H1 (cell line): ENCODE measurements at regions of chr6 and their contacts with region 1.

Region 1: GRCh38 chr6:36759148-36759759 is 61.6 kb downstream of the RAB44 start:
- DNase-seq: peak; percentile 23 to 94
- H3K4me3 ChIP-seq: no peak overlapping the region
- H3K27ac ChIP-seq: no peak overlapping the region
- H3K4me1 ChIP-seq: peaks cover 0 to 8% (median 2%) of the 10 kb centered on the region in 4 experiments; a peak in 3 of 7 replicates
- H3K27me3 ChIP-seq: no peaks in the 10 kb centered on the region
- CTCF ChIP-seq: peak; percentile 92 to 99 (median 94)
- EP300 ChIP-seq: no peak
- POLR2A ChIP-seq: no peak
- RAD21 ChIP-seq: peak; percentile 88 to 92

Region 2: GRCh38 chr6:35857853-35858252 is 901.4 kb before region 1 on chr6:
- CTCF ChIA-PET with region 1: no interaction called
- POLR2A ChIA-PET with region 1: no interaction called
- DNase-seq: no peak
- H3K4me3 ChIP-seq: no peak overlapping the region
- H3K27ac ChIP-seq: no peak overlapping the region
- H3K4me1 ChIP-seq: 0 out of 7 replicates have a peak, but pooled peaks cover 0 to 3% (median under 1%) of the 10 kb centered on the region in 4 experiments
- H3K27me3 ChIP-seq: no peaks in the 10 kb centered on the region
- CTCF ChIP-seq: no peak
- EP300 ChIP-seq: no peak
- POLR2A ChIP-seq: no peak
- RAD21 ChIP-seq: no peak

Region 3: GRCh38 chr6:36623547-36624459 is 135.5 kb before region 1 on chr6:
- CTCF ChIA-PET with region 1: interaction called, 29 read pairs
- POLR2A ChIA-PET with region 1: no interaction called
- DNase-seq: peak; percentile 63 to 96
- H3K4me3 ChIP-seq: no peak overlapping the region
- H3K27ac ChIP-seq: no peak overlapping the region
- H3K4me1 ChIP-seq: peaks cover 0 to 2% (median 0%) of the 10 kb centered on the region in 4 experiments; a peak in 1 of 7 replicates
- H3K27me3 ChIP-seq: no peaks in the 10 kb centered on the region
- CTCF ChIP-seq: peak; percentile 88 to 95 (median 94)
- EP300 ChIP-seq: no peak
- POLR2A ChIP-seq: no peak
- RAD21 ChIP-seq: peak; percentile 95 to 96

Region 4: DNA sequence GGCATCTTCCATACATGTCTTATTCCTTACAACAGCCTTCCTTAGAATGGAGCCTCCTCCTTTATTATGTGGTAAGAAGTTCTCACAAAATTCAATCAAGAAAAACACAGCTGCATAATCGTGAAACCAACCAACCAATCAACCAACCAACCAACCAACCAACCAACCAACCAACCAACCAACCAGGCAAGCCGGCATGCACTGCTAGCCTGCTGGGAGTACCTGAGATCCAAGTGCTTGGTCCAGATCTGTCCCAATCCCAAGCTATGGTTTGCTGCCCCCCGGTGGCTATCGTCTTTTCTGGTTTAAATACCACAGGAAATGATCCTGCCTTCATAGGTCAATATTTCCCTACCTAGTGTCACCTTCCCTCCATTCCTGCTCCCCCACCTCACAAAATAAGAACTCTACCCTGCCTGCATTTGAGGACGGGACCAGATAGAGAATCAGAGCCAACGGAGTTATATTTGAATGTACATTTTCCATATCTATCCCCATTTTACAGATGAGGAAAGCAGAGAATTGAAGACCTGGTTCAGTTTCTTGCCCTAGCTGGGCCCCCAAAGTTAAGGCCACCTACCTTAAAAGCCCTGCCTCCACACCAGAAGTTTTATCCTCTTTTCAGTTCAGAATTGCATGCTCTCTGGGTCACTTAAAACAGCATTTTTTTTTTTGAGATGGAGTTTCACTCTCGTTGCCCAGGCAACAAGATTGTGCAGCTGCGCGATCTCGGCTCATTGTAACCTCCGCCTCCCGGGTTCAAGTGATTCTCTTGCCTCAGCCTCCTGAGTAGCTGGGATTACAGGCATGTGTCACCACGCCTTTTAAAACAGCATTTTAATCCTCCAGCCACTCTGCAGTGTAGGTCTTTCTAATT is 34.5 kb before region 1 on chr6:
- CTCF ChIA-PET with region 1: interaction called, 19 read pairs
- POLR2A ChIA-PET with region 1: no interaction called
- DNase-seq: peak; percentile 49 to 86
- H3K4me3 ChIP-seq: no peak overlapping the region
- H3K27ac ChIP-seq: no peak overlapping the region
- H3K4me1 ChIP-seq: no peaks in the 10 kb centered on the region; a peak in 1 of 7 replicates
- H3K27me3 ChIP-seq: no peaks in the 10 kb centered on the region
- CTCF ChIP-seq: peak in 2 of 3 experiments; percentile 80; a peak in 3 of 4 replicates
- EP300 ChIP-seq: no peak
- POLR2A ChIP-seq: no peak
- RAD21 ChIP-seq: peak; percentile 83 to 84

Region 5: DNA sequence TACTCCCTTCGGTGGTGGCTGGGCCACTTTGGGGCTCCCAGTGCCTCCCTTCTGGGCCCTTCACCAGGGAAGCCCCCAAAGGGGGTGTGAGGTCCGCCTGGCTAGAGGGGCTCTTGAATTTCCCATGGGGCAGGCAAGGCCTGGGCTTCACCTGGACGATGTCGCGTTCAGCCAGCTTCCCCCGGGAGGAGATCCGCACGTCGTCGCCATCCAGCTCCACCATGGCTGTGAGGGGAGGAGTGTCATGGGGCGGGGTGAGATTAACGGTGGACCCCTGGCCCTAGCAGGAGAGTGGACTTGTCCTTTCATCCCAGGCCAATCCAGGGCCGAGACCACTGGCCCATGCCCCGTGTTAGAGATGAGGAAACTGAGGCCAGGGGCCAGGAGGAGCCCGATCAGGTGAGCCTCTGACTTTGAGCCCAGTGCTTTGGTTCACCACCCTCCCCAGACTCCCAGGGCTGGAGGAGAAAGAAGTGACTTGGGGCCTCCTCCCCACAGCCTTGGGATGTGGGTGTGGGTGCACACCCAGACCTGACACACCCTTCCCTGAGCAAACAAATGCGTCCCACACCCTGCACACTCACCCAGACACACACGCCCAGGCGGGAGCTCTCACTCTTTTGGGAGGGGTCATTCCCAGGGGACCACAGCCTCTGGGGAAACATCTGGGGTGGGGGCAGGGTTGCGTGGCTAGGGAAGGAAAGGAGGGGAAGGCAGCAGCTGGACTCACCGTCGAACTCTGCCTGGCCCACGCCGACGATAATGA is 15.5 kb before region 1 on chr6:
- CTCF ChIA-PET with region 1: interaction called, 17 read pairs
- POLR2A ChIA-PET with region 1: no interaction called
- DNase-seq: no peak
- H3K4me3 ChIP-seq: no peak overlapping the region
- H3K27ac ChIP-seq: no peak overlapping the region; the same call in 1 of the 2 replicates
- H3K4me1 ChIP-seq: no peaks in the 10 kb centered on the region; a peak in 1 of 7 replicates
- H3K27me3 ChIP-seq: no peaks in the 10 kb centered on the region; a peak in 1 of 7 replicates
- CTCF ChIP-seq: no peak
- EP300 ChIP-seq: no peak
- POLR2A ChIP-seq: no peak
- RAD21 ChIP-seq: no peak

Region 6: DNA sequence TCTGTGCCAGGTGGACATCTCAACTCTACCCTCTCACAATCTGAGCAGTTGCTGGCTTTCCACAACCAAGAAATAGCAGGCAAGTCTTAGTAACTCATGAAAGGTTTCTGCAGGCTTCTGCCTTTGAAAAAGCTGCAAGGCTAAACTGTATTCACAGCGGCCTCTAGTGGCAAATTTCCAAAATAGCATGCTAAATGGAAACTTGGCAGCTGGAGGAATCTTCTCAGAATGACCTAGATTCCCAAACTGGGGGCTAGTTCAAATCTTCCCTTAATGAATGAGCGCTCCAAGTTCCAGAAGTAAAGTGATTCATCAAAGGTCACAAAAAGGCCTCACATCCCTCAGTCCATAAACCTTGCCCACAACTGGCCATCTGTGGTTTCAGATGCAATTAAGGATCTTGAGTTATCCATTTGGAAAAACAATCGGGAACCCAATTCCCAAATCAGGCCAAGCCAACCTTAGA is 91.9 kb after region 1 on chr6:
- CTCF ChIA-PET with region 1: interaction called, 293 read pairs
- POLR2A ChIA-PET with region 1: interaction called, 5 read pairs
- DNase-seq: peak in 1 of 2 experiments; percentile 71
- H3K4me3 ChIP-seq: no peak overlapping the region
- H3K27ac ChIP-seq: no peak overlapping the region
- H3K4me1 ChIP-seq: peaks cover 7 to 17% (median 9%) of the 10 kb centered on the region in 4 experiments
- H3K27me3 ChIP-seq: peaks cover 0 to 9% (median 0%) of the 10 kb centered on the region in 4 experiments; a peak in 2 of 7 replicates
- CTCF ChIP-seq: peak in 2 of 3 experiments; percentile 75 to 85; a peak in 3 of 4 replicates
- EP300 ChIP-seq: no peak
- POLR2A ChIP-seq: no peak
- RAD21 ChIP-seq: peak; percentile 81 to 89

Region 7: GRCh38 chr6:38370653-38371601 is 1611.7 kb after region 1 on chr6:
- CTCF ChIA-PET with region 1: no interaction called
- POLR2A ChIA-PET with region 1: no interaction called
- DNase-seq: no peak
- H3K4me3 ChIP-seq: no peak overlapping the region
- H3K27ac ChIP-seq: no peak overlapping the region
- H3K4me1 ChIP-seq: no peaks in the 10 kb centered on the region
- H3K27me3 ChIP-seq: no peaks in the 10 kb centered on the region
- CTCF ChIP-seq: no peak
- EP300 ChIP-seq: no peak
- POLR2A ChIP-seq: no peak
- RAD21 ChIP-seq: no peak